ENCODE measurements at regions of chr13 and their contacts with region 1.

Region 1: GRCh38 chr13:25574437-25575411 is 202.9 kb downstream of the ATP8A2 start:
- DNase-seq: peak; percentile 47 to 79 (median 54)
- ATAC-seq: peak; percentile 95
- H3K4me3 ChIP-seq: no peak overlapping the region
- H3K27ac ChIP-seq: no peak overlapping the region
- H3K4me1 ChIP-seq: no peaks in the 10 kb centered on the region
- H3K27me3 ChIP-seq: peaks cover 0 to 22% of the 10 kb centered on the region in 2 experiments; a peak in 2 of 5 replicates
- CTCF ChIP-seq: peak; percentile 75 to 93 (median 89)
- EP300 ChIP-seq: no peak
- POLR2A ChIP-seq: no peak
- RAD21 ChIP-seq: peak; percentile 66 to 84

Region 2: DNA sequence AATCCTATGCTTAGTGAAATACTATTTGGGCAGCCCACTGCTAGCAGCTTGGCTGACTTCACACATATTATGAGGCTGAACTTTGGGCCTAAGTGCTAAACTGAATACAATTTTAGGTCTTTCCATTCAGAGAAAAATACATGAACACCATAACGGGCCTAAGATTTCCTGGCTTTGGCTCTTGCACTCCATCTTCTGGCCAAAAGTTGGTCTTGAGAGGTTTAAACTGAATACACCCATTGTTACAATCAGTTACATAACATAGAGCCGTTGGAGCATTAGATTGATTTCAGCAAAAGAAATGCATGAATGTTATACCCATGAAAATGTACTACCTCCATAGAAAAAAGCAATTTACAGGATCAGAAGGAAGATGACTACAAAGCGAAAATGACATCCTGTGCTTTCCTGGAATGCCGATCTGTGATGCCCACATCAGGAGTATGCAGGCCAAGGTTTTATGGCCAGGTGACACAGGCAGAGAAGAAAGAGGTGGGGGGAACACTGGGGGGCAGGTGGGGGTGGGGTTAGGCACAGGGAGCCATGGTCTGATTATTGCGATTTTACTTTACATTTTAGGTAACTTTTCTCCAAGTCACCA is 488.2 kb after region 1 on chr13:
- CTCF ChIA-PET with region 1: no interaction called
- POLR2A ChIA-PET with region 1: no interaction called
- in situ Hi-C with region 1: loop called (anchors 10 kb)
- intact Hi-C with region 1: loop called (anchors 5 kb)
- DNase-seq: peak in 1 of 4 experiments; percentile 24
- ATAC-seq: peak; percentile 63; the same call in 2 of the 3 replicates
- H3K4me3 ChIP-seq: no peak overlapping the region
- H3K27ac ChIP-seq: no peak overlapping the region
- H3K4me1 ChIP-seq: no peaks in the 10 kb centered on the region
- H3K27me3 ChIP-seq: no peaks in the 10 kb centered on the region
- CTCF ChIP-seq: peak; percentile 30 to 54 (median 46); a peak in 3 of 6 replicates
- EP300 ChIP-seq: no peak
- POLR2A ChIP-seq: no peak
- RAD21 ChIP-seq: peak; percentile 30 to 58; a peak in 3 of 4 replicates

Region 3: DNA sequence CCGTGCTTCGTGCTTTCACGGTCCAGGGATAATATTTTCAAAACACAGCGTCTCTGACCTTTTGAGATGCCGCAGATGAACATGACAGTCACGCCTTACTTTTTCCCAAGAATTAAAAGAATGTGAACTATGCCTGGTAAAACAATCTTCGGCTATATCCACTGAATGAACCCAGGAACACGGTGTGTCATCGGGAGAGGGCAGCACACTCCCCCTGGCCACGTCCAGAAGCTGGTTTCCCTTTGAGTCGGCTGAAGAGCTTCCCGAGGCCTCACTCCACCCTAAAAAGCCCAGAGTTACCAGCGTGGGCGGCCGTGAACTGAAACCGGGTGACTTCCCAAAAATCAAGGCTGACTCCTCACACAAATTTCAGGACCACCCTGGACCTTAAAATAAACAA is 500.0 kb after region 1 on chr13:
- CTCF ChIA-PET with region 1: no interaction called
- POLR2A ChIA-PET with region 1: interaction called, 3 read pairs
- in situ Hi-C with region 1: loop called (anchors 10 kb)
- intact Hi-C with region 1: loop called (anchors 5 kb)
- DNase-seq: no peak
- ATAC-seq: no peak
- H3K4me3 ChIP-seq: no peak overlapping the region
- H3K27ac ChIP-seq: no peak overlapping the region
- H3K4me1 ChIP-seq: no peaks in the 10 kb centered on the region
- H3K27me3 ChIP-seq: no peaks in the 10 kb centered on the region; a peak in 1 of 5 replicates
- CTCF ChIP-seq: no peak
- EP300 ChIP-seq: no peak
- POLR2A ChIP-seq: no peak
- RAD21 ChIP-seq: no peak